ENCODE measurements at regions of chr1 and their contacts with region 1.

Region 1: DNA sequence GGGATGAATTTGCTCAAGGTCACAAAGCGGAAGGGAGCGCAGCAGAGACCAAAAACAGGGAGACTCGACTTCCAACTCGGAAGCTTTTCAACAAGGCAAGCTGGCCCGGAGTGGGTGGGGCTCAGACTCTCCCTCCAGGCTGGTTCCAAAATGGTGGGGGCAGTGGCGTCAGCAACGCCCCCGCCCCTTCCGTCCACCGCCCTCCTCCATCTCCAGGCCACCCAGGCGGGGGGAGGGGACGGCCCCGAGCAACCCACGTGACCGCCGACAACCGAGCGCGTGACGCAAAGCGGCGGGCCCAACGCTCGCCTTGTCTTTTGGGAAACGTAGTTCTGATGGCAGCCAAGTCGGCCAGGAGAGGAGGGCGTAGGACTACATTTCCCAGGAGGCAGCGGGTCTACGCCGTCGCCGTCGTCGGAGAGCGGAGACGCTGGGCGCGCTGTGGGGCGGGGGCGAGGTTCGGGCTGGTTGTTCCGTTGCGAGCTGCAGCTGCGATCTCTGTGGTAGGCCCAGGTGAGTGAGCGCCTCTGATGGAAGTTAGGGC is at the start of gene THRAP3:
- DNase-seq: peak; percentile 95 to 100 (median 100)
- ATAC-seq: peak; percentile 87
- H3K4me3 Mint-ChIP-seq: peak within 1 kb of the TSS; percentile 94 to 100 (median 98)
- H3K27ac Mint-ChIP-seq: peak within 1 kb of the TSS; percentile 97 to 100 (median 100)
- H3K4me1 Mint-ChIP-seq: peaks cover 20 to 48% (median 43%) of the 10 kb centered on the region in 4 donors
- H3K27me3 Mint-ChIP-seq: no peaks in the 10 kb centered on the region
- polyA plus RNA-seq, gene THRAP3: 87.6 to 106 (median 97.8) TPM

Region 2: DNA sequence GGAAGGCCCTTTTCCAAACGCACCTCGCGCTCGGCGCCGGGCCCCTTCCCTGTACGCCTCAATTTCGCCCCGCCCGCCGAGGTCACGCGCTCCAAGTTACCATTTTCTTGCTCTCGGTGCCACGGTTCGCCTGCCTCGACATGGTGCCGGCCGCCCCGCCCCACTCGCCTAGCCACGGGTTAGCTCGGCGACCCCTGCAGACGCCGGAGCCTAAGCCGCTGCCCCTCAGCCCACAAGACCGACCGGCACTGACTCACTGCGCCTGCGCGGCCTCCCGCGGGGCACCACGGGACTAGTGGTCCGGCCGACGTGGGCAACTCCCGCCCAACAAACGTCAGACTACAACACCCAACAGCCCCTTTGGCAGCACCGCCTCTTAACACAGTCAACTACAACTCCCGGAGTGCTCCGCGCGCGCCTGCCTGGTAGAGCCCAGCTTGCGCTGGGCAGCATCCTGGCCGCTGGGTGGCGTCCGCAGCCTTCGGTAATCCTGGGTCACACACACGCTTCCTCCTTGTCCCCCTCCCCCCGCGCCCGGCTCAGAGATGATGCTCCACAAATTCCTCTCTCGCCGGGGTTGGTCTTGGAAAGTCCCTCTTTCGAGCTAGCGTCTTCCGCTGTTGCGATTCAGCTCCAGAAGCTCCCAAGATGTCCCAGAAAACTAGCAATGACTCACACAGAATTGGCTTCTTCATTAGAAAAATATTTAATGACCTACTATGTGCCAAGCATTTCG is 74.7 kb before region 1 on chr1 and contains the start of gene TRAPPC3:
- POLR2A ChIA-PET with region 1: interaction called, 34 read pairs
- DNase-seq: peak; percentile 97 to 99 (median 99)
- ATAC-seq: peak; percentile 91 to 95
- H3K4me3 Mint-ChIP-seq: peak within 1 kb of the TSS; percentile 93 to 100 (median 98)
- H3K27ac Mint-ChIP-seq: peak within 1 kb of the TSS; percentile 94 to 100 (median 99)
- H3K4me1 Mint-ChIP-seq: peaks cover 29 to 81% (median 74%) of the 10 kb centered on the region in 4 donors
- H3K27me3 Mint-ChIP-seq: no peaks in the 10 kb centered on the region
- polyA plus RNA-seq, gene TRAPPC3: 99.9 to 115 (median 110) TPM

Region 3: GRCh38 chr1:36160949-36161485 is 63.0 kb before region 1 on chr1:
- POLR2A ChIA-PET with region 1: interaction called, 52 read pairs
- DNase-seq: peak; percentile 38 to 75 (median 57)
- ATAC-seq: peak; percentile 34 to 36
- H3K4me3 Mint-ChIP-seq: peak overlapping the region; percentile 76 to 95 (median 90)
- H3K27ac Mint-ChIP-seq: peak overlapping the region; percentile 92 to 99 (median 98)
- H3K4me1 Mint-ChIP-seq: peaks cover 52 to 79% (median 76%) of the 10 kb centered on the region in 4 donors
- H3K27me3 Mint-ChIP-seq: no peaks in the 10 kb centered on the region

Region 4: DNA sequence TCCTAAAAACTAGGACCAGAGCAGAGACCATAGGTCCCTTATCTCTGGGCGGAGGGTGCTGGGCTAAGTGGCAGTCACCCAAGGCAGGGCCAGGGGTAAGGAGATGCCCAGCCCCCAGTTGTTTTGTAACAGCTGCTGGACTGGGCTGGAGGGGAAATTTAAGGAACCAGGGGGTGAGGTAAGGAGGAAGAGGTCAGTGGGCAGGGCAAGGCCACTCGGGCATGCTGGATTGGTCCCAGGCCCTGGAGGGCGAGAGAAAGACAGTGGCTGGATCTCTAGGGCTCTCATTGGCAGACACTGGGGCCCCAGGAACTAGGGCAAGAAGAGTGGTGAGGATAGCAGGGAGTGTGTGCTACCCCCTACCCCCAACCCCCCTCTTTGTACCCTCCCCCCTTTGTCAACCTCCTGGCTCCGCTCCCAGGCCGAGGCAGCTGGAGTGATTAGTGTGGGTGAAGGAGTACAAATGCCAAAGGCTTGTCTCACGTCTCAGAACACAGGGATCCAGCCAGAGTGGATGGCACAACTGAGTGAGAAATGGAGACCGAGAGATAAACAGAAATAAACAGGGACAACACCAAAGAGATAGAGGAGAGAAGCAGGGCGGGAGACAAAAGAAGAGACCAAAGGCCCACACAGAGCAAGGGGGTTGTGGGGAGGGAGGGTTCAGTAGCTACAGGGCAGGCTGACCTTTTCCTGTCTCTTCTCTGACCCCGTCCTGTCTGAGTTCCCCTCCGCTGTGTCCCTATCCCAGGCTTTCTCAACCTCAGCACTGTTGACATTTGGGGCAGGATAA is 20.3 kb before region 1 on chr1:
- POLR2A ChIA-PET with region 1: no interaction called
- DNase-seq: no peak
- ATAC-seq: no peak
- H3K4me3 Mint-ChIP-seq: no peak overlapping the region
- H3K27ac Mint-ChIP-seq: peak overlapping the region in 1 of 10 donors; percentile 59
- H3K4me1 Mint-ChIP-seq: peaks cover 0 to 2% (median 0%) of the 10 kb centered on the region in 4 donors
- H3K27me3 Mint-ChIP-seq: peaks cover 0 to 3% (median 0%) of the 10 kb centered on the region in 5 donors

Region 5: DNA sequence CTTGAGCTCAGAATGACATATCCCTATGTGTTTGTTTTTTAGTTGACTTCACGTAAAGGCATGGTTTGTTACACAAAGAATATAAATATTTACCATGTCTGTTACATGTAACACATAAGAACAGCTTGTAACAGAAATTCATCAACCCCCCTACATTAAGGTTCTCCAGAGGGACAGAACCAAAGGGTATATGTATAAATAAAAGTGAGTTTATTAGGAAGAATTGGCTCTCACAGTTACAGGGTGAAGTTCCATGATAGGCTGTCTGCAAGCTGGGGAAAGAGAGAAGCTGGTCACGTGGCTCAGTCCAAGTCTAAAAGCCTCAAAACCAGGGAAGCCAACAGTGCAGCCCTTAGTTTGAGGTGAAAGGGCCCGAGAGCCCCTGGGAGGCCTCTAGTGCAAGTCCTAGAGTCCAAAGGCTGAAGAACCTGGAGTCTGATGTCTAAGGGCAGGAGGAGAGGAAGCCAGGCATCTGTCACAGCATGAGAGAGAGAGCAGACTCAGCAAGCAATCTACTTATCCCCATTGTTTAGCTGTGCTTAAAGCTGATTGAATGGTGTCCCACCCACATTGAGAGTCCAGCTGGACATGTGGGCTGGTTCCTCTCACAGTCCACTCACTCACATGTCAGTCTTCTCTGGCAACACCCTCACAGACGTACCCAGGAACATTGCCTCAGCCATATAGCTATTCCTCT is 16.0 kb after region 1 on chr1:
- POLR2A ChIA-PET with region 1: interaction called, 11 read pairs
- DNase-seq: no peak
- ATAC-seq: no peak
- H3K4me3 Mint-ChIP-seq: peak overlapping the region in 1 of 10 donors; percentile 30
- H3K27ac Mint-ChIP-seq: peak overlapping the region in 9 of 10 donors; percentile 15 to 72 (median 37)
- H3K4me1 Mint-ChIP-seq: peaks cover 25 to 61% (median 51%) of the 10 kb centered on the region in 4 donors
- H3K27me3 Mint-ChIP-seq: no peaks in the 10 kb centered on the region

Measured in naive thymus-derived CD8-positive, alpha-beta T cell (primary cell).